ENCODE measurements at regions of chr14 and their contacts with region 1.

Region 1: GRCh38 chr14:99393047-99393655 is 87.5 kb downstream of the SETD3 start:
- DNase-seq: peak; percentile 38 to 79
- H3K4me3 ChIP-seq: no peak overlapping the region
- H3K27ac ChIP-seq: no peak overlapping the region
- H3K4me1 ChIP-seq: peaks cover 0 to 16% (median 3%) of the 10 kb centered on the region in 4 experiments; a peak in 4 of 7 replicates
- H3K27me3 ChIP-seq: no peaks in the 10 kb centered on the region
- CTCF ChIP-seq: peak; percentile 78 to 97 (median 96)
- EP300 ChIP-seq: no peak
- POLR2A ChIP-seq: no peak
- RAD21 ChIP-seq: peak; percentile 67 to 71

Region 2: GRCh38 chr14:99287269-99287942 is 105.7 kb before region 1 on chr14:
- CTCF ChIA-PET with region 1: interaction called, 10 read pairs
- POLR2A ChIA-PET with region 1: no interaction called
- DNase-seq: peak in 1 of 2 experiments; percentile 29
- H3K4me3 ChIP-seq: no peak overlapping the region
- H3K27ac ChIP-seq: no peak overlapping the region
- H3K4me1 ChIP-seq: peaks cover 0 to 6% (median 1%) of the 10 kb centered on the region in 4 experiments; a peak in 3 of 7 replicates
- H3K27me3 ChIP-seq: no peaks in the 10 kb centered on the region
- CTCF ChIP-seq: no peak
- EP300 ChIP-seq: no peak
- POLR2A ChIP-seq: no peak
- RAD21 ChIP-seq: no peak

Region 3: DNA sequence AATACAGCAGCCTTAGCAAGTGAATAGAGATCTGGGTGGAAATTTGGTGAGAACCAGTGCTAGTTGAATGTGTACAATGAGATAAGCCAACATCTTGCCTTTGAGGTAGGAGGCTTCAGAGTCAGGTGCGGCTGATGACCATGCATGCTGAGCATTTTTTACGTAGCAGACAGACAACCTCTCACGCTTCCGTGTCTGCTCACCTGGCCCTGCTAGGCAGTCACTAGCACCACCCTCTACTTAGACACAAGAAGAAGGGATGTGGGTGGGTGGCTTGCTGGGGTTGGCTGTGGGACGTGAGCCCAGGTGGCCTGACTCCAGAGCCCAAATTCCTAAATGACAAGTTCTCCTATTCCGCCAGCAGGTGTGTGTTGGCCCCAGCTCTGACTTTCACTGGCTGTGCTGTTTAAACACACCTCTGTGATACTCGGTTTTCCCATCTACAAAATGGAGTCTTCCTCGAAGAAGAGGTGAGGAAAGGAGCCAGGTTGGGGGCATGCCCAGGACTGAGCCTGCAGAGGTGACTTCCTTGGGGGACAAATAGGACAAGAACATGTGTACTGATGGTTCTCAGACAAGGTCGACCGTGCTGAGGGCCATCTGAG is 63.3 kb before region 1 on chr14:
- CTCF ChIA-PET with region 1: interaction called, 12 read pairs
- POLR2A ChIA-PET with region 1: interaction called, 3 read pairs
- DNase-seq: no peak
- H3K4me3 ChIP-seq: no peak overlapping the region
- H3K27ac ChIP-seq: no peak overlapping the region
- H3K4me1 ChIP-seq: no peaks in the 10 kb centered on the region; a peak in 1 of 7 replicates
- H3K27me3 ChIP-seq: no peaks in the 10 kb centered on the region
- CTCF ChIP-seq: no peak
- EP300 ChIP-seq: no peak
- POLR2A ChIP-seq: no peak
- RAD21 ChIP-seq: no peak

Region 4: DNA sequence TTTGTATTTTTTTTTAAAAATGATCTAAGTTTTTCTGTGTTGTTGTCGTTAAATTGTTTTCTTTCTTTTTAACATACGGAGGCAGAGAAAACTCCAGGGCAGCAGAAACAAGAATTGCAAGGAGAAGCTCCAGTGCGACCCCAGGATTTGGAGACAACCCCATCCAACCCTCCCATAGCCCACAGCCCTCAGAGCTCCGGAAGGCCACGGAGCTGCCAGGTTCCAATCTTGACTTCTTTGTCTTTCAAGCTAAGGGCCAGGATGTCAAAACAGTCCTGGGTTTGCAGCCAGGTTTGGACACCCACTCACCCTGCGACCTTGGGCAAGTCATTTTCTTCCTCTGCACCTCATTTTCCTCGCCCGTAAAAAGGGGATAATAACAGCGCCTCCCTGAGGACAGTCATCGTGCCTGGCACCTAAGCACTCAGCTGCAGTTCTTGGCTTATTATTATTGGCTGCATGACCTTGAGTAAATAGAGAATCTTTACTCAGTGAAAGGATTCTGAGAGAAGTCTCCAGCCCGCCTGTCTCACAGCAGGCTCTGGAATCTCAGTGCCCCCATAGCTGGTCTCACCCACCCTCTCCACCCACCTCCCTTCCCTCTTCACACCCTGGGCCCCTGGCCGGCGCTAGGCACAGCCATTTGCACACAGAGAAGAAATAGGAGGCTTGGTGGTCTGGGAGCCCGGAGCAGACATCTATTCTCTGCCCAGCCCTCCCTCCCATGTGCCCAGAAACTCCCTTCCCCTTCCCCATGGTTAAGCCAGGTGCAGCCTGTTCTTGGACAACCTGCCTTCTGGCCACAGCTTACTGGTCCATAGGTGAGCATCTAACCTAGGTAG is 41.8 kb before region 1 on chr14:
- CTCF ChIA-PET with region 1: interaction called, 12 read pairs
- POLR2A ChIA-PET with region 1: no interaction called
- DNase-seq: no peak
- H3K4me3 ChIP-seq: no peak overlapping the region
- H3K27ac ChIP-seq: no peak overlapping the region
- H3K4me1 ChIP-seq: no peaks in the 10 kb centered on the region; a peak in 1 of 7 replicates
- H3K27me3 ChIP-seq: no peaks in the 10 kb centered on the region
- CTCF ChIP-seq: peak; percentile 27 to 52 (median 44); a peak in 3 of 4 replicates
- EP300 ChIP-seq: no peak
- POLR2A ChIP-seq: no peak
- RAD21 ChIP-seq: peak; percentile 25 to 41; a peak in 2 of 4 replicates

Region 5: DNA sequence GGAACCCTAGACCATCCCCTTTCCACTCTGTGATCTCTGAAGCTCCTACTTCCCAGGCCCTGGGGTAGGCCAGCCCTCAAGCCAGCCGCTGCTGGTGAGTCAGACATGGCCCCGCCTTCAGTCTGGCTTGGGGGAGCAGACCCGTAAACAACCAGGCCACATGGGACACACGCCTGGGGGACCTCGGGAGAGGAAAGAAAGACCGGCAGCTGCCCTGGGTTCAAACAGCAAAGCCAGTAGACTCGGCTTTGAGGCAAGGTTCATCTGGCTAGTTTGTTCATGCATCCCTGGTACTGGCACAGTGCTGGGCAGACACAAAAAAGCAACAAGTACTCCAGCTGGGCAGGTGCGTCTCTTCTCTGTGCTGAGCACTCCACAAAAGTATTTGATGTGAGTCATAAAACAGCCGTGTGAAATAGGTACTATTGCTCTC is 14.4 kb before region 1 on chr14:
- CTCF ChIA-PET with region 1: interaction called, 123 read pairs
- POLR2A ChIA-PET with region 1: interaction called, 6 read pairs
- DNase-seq: no peak
- H3K4me3 ChIP-seq: no peak overlapping the region
- H3K27ac ChIP-seq: no peak overlapping the region
- H3K4me1 ChIP-seq: peaks cover 0 to 10% (median under 1%) of the 10 kb centered on the region in 4 experiments; a peak in 4 of 7 replicates
- H3K27me3 ChIP-seq: no peaks in the 10 kb centered on the region
- CTCF ChIP-seq: no peak
- EP300 ChIP-seq: no peak
- POLR2A ChIP-seq: no peak
- RAD21 ChIP-seq: no peak

Region 6: GRCh38 chr14:99447739-99448138 is 54.6 kb after region 1 on chr14:
- CTCF ChIA-PET with region 1: no interaction called
- POLR2A ChIA-PET with region 1: no interaction called
- DNase-seq: no peak
- H3K4me3 ChIP-seq: no peak overlapping the region
- H3K27ac ChIP-seq: no peak overlapping the region
- H3K4me1 ChIP-seq: no peaks in the 10 kb centered on the region
- H3K27me3 ChIP-seq: no peaks in the 10 kb centered on the region
- CTCF ChIP-seq: no peak
- EP300 ChIP-seq: no peak
- POLR2A ChIP-seq: no peak
- RAD21 ChIP-seq: no peak

Region 7: GRCh38 chr14:99460793-99461192 is 67.6 kb after region 1 on chr14:
- CTCF ChIA-PET with region 1: interaction called, 10 read pairs
- POLR2A ChIA-PET with region 1: no interaction called
- DNase-seq: peak in 1 of 2 experiments; percentile 45
- H3K4me3 ChIP-seq: no peak overlapping the region
- H3K27ac ChIP-seq: 0 out of 2 replicates have a peak overlapping the region, but pooled peaks have one; percentile 12
- H3K4me1 ChIP-seq: peaks cover 0 to 18% (median 12%) of the 10 kb centered on the region in 4 experiments; a peak in 5 of 7 replicates
- H3K27me3 ChIP-seq: no peaks in the 10 kb centered on the region
- CTCF ChIP-seq: peak in 2 of 3 experiments; percentile 17 to 43; a peak in 1 of 4 replicates
- EP300 ChIP-seq: no peak
- POLR2A ChIP-seq: no peak
- RAD21 ChIP-seq: peak in 1 of 2 experiments; percentile 20; a peak in 1 of 4 replicates

Measured in H1 (cell line).